ENCODE measurements at regions of chr6 and their contacts with region 1.

Region 1: GRCh38 chr6:56764081-56764566 is 121.4 kb upstream of the DST start:
- DNase-seq: no peak
- ATAC-seq: peak; percentile 66

Region 2: DNA sequence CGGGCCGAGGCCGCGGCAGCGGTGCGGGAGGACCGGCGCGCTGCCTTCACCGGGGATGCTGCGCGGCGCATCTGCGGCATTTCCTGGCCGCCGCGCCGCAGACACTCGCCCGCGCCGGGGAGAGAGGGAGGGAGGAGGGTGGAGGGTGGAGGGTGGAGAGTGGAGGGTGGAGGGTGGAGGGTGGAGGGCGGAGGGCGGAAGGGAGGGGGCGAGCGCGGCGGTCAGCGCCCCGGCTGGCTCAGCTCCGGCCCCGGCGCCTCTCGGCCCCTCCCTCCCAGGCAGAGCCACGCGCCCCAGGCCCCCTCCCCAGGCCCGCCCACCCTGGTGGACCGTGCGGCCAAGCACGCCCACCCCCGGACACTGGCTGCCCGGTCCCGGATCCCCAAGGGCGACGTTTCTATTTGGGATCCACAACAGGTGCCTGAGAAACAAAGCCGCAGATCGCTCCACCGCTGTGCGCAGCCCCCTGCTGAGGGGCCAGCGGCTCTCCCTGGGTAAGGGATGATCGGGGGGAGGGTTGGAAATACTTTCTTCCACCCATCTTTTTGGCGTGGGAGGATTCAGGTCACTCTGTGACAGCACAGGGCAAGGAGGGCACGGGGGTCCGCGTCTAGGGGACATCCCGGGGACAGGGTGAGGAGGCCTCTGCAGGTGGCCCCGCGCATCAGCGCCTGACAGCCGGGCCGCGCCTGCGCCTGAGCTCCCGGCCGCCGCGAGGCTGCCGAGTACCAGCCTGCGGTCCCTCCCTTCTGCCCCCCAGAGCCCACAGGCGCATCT is 79.6 kb after region 1 on chr6:
- intact Hi-C with region 1: loop called (anchors 10 kb)
- DNase-seq: peak; percentile 88
- ATAC-seq: peak; percentile 93

Region 3: DNA sequence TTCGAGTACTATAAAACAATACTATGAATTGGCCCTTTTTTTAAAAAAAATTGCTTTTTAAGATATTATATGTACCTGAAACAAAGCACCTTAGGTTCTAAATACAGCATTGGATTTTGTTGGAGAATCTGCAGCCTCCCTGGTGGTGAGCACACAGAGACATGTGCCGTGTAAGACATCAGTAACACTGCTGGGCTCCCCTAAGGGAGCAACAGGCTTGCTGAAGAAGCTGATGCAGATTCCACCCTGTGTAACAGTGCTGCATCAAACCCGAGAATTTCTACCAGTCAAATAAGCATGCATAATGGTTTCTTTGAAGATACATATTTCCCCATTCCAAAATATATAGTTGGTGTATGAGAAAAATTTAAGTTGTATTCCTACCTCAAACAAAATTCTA is 299.7 kb after region 1 on chr6:
- intact Hi-C with region 1: no loop called
- DNase-seq: no peak
- ATAC-seq: no peak